Activated CD4-positive, alpha-beta memory T cell treated with anti-CD3 and anti-CD28 coated beads, Interleukin-2, amount 10 ng/mL, durations not matched to agents 7 days and 5 days (primary cell): ENCODE measurements at regions of chr22 and their contacts with region 1.

Region 1: DNA sequence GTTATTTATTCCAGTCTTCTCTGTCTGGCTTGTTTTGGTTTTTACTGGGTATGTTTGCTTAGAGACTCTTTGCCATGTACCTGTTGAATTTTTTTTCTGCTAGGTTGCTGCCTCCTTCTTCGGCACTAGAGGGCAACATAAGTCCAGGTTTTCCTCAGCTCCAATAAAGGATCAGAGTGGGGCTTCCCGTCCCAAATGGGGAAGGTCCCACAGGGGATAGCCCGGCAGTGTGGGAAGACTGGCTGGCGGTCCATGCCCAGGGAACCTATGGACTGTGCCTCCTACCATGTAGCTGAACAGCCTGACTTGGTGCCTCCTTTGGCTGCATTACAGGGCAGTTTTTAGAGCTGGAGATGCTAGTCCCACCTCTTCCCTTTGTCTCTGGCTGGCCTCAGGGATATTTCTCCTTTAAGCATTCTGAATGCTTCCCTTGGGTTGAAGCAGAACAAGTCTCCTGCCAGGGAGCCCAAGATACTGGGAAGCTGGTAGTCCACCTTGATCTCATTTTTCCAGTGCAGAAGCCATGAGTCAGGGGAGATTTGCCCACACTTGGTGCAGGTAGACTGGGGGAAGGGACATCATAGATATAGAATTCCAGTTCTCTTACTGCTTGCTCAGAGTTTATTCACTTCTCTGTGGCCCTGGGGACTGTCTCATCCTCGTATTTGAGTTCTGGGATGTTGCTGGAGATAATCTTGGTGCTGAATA is 60.2 kb downstream of the BRD1 start:
- DNase-seq: peak; percentile 44
- H3K4me3 Mint-ChIP-seq: no peak overlapping the region
- H3K27ac Mint-ChIP-seq: no peak overlapping the region
- H3K4me1 Mint-ChIP-seq: peaks cover 6% of the 10 kb centered on the region
- H3K27me3 Mint-ChIP-seq: no peaks in the 10 kb centered on the region

Region 2: DNA sequence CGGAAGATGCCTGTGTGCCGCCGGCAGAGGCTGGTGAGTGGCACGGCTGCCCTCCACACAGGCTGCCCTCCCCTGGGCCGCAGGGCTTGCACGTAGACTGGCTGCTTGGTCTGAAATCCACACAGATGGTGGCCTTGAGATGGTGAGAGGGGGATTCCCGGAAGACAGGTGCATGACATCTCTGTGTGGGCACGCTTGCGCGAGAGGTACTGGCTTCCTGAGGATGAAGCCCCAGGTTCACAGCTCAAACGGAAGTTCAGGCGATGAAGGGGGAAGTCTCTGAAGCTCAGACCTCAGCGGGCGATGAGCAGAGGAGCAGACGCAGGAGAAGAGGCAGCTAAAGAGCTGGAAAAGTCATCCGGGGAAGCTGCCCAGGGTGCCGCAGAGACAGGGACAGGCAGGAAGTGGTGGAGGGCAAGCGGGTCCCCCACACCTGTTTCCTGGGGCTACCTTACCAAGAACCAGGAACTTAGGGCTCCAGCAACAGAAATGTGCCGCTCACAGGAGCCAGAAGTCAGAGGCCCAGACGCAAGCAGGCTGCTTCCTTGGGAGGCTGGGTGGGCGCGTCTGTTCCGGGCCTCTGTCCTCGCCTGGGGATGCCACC is 158.1 kb after region 1 on chr22:
- CTCF ChIA-PET with region 1: interaction called, 17 read pairs
- POLR2A ChIA-PET with region 1: interaction called, 4 read pairs
- DNase-seq: peak; percentile 68
- H3K4me3 Mint-ChIP-seq: peak overlapping the region; percentile 57
- H3K27ac Mint-ChIP-seq: peak overlapping the region; percentile 84
- H3K4me1 Mint-ChIP-seq: peaks cover 47% of the 10 kb centered on the region
- H3K27me3 Mint-ChIP-seq: no peaks in the 10 kb centered on the region

Region 3: GRCh38 chr22:49930739-49931412 is 163.4 kb after region 1 on chr22:
- CTCF ChIA-PET with region 1: interaction called, 17 read pairs
- POLR2A ChIA-PET with region 1: interaction called, 4 read pairs
- DNase-seq: peak; percentile 58
- H3K4me3 Mint-ChIP-seq: no peak overlapping the region
- H3K27ac Mint-ChIP-seq: peak overlapping the region; percentile 37
- H3K4me1 Mint-ChIP-seq: peaks cover 48% of the 10 kb centered on the region
- H3K27me3 Mint-ChIP-seq: no peaks in the 10 kb centered on the region